ENCODE measurements at regions of chr2 and their contacts with region 1.

Region 1: GRCh38 chr2:42964439-42965083 is 172.2 kb upstream of the HAAO start:
- DNase-seq: peak in 1 of 3 donors; percentile 47
- ATAC-seq: peak in 1 of 4 donors; percentile 17
- H3K4me3 ChIP-seq: no peak overlapping the region
- H3K27ac ChIP-seq: no peak overlapping the region
- H3K4me1 ChIP-seq: peaks cover 0 to 20% (median 8%) of the 10 kb centered on the region in 4 donors
- H3K27me3 ChIP-seq: no peaks in the 10 kb centered on the region
- CTCF ChIP-seq: no peak
- POLR2A ChIP-seq: no peak

Region 2: DNA sequence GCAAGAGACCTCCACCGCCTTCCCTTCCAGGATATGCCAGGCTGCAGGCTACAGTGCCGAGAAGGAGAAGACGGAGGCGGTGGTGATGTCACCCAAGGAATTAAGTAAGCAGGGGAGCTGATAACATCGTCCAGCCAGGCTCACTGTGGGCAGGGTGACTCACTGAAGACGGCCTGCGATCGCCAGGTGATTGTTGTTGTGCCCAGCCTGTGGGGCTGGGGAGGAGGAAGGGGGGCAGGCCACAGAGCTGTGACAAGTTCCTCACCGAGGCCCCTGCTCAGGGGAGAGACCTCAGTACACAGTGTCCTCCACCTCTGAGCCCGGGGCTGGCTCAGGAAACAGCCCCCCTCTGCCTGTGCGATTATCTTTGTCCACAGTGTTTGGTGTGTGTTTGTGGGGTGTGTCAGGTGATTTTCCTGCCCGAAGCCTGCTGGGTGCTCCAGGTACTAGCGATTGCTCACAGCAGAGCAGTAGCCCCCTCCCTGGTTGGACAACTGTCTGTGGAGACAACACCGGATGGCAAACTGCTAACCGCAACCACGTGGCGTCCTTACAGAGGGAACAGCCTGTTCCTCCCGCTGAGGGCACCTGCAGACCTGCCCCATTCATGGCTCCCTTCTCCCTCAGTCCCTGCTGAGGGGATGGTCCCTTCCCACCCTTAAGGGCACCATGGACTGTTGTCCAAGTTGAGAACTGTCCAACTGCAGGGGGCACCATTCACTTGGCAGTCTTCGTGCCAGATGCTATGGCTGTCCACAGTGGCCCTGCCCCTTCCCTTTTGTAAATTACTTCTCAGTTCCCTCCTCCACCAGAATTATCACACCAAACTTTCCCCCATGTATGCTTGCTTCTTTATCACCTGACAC is 166.7 kb after region 1 on chr2:
- intact Hi-C with region 1: loop called in 1 of 2 experiments (anchors 10 kb)
- DNase-seq: peak; percentile 69 to 80 (median 74)
- ATAC-seq: peak; percentile 49 to 69 (median 63)
- H3K4me3 ChIP-seq: no peak overlapping the region
- H3K27ac ChIP-seq: peak overlapping the region; percentile 24 to 54 (median 51)
- H3K4me1 ChIP-seq: no peaks in the 10 kb centered on the region
- H3K27me3 ChIP-seq: no peaks in the 10 kb centered on the region
- CTCF ChIP-seq: peak; percentile 48 to 58 (median 51)
- POLR2A ChIP-seq: no peak

Region 3: GRCh38 chr2:43169987-43170386 is 205.4 kb after region 1 on chr2:
- intact Hi-C with region 1: loop called in 1 of 2 experiments (anchors 10 kb)
- DNase-seq: peak in 1 of 3 donors; percentile 74
- ATAC-seq: peak; percentile 24 to 64 (median 49)
- H3K4me3 ChIP-seq: no peak overlapping the region
- H3K27ac ChIP-seq: peak overlapping the region in 2 of 3 donors; percentile 38 to 51
- H3K4me1 ChIP-seq: peaks cover 0 to 9% (median 0%) of the 10 kb centered on the region in 4 donors
- H3K27me3 ChIP-seq: no peaks in the 10 kb centered on the region
- CTCF ChIP-seq: peak; percentile 42 to 72 (median 56)
- POLR2A ChIP-seq: no peak